HEK293 (cell line): ENCODE measurements at regions of chr3 and their contacts with region 1.

Region 1: GRCh38 chr3:113912552-113913236 is 35.1 kb upstream of the ZDHHC23 start:
- H3K4me3 ChIP-seq: no peak overlapping the region
- H3K27ac ChIP-seq: no peak overlapping the region
- H3K4me1 ChIP-seq: no peaks in the 10 kb centered on the region
- CTCF ChIP-seq: no peak

Region 2: GRCh38 chr3:113736548-113737089 is 176.1 kb before region 1 on chr3:
- CTCF ChIA-PET with region 1: interaction called, 15 read pairs
- POLR2A ChIA-PET with region 1: no interaction called
- H3K4me3 ChIP-seq: no peak overlapping the region
- H3K27ac ChIP-seq: no peak overlapping the region
- H3K4me1 ChIP-seq: no peaks in the 10 kb centered on the region
- CTCF ChIP-seq: no peak

Region 3: GRCh38 chr3:113844622-113845222 is 68.0 kb before region 1 on chr3:
- CTCF ChIA-PET with region 1: interaction called, 11 read pairs
- POLR2A ChIA-PET with region 1: no interaction called
- H3K4me3 ChIP-seq: no peak overlapping the region
- H3K27ac ChIP-seq: no peak overlapping the region
- H3K4me1 ChIP-seq: no peaks in the 10 kb centered on the region
- CTCF ChIP-seq: no peak

Region 4: DNA sequence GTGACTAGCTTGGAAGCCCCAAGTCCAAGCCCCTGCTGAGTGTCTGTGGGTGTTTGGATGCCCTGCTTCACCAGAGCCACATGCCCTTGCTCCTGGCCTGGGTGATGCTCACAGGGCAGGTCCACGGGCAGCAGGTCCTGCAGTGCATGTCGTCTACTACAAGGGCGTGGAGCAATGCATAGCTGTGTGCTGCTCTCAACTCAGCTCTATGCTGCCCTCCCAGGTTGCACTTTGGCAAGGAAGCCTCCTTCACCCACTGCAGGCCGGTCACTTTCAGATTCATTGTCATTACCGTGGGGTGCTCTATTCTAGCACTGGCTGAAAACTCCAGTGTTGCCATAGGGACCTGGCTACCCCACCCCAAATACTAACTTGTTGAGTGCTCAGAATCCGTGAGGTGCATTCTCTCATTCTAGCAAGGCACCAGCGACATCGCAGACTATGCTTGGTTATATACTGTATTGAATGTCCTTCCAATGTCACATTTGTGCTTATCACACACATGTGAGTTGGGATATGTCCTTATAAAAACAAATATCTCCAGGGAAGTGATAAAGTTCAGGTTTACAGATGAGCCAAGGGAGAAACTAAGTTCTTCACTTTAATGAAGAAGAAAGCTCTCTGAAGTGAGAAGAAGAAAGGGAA is 22.3 kb before region 1 on chr3:
- CTCF ChIA-PET with region 1: no interaction called
- POLR2A ChIA-PET with region 1: no interaction called
- H3K4me3 ChIP-seq: no peak overlapping the region
- H3K27ac ChIP-seq: no peak overlapping the region
- H3K4me1 ChIP-seq: no peaks in the 10 kb centered on the region
- CTCF ChIP-seq: no peak